HepG2 (cell line): ENCODE measurements at regions of chr10 and their contacts with region 1.

Region 1: GRCh38 chr10:121974535-121975294 is at the start of gene NSMCE4A:
- DNase-seq: peak; percentile 60
- ATAC-seq: peak; percentile 91
- H3K4me3 ChIP-seq: peak within 1 kb of the TSS; percentile 69 to 89 (median 83)
- H3K27ac ChIP-seq: peak within 1 kb of the TSS; percentile 97
- H3K4me1 ChIP-seq: peaks cover 27% of the 10 kb centered on the region
- H3K27me3 ChIP-seq: no peaks in the 10 kb centered on the region
- CTCF ChIP-seq: peak; percentile 78
- EP300 ChIP-seq: no peak; a peak in 1 of 4 replicates
- POLR2A ChIP-seq: peak; percentile 67 to 70; a peak in 3 of 4 replicates
- RAD21 ChIP-seq: peak; percentile 75
- total RNA-seq, gene NSMCE4A: 91.6 and 108 TPM in 2 replicates

Region 2: GRCh38 chr10:121935702-121936101 is 39.0 kb before region 1 on chr10:
- CTCF ChIA-PET with region 1: no interaction called
- POLR2A ChIA-PET with region 1: interaction called, 14 read pairs
- in situ Hi-C with region 1: no loop called
- intact Hi-C with region 1: loop called (anchors 2 kb)
- DNase-seq: peak; percentile 96
- ATAC-seq: peak; percentile 95
- H3K4me3 ChIP-seq: peak overlapping the region in 1 of 3 experiments; percentile 41; a peak in 1 of 6 replicates
- H3K27ac ChIP-seq: peak overlapping the region; percentile 74
- H3K4me1 ChIP-seq: peaks cover 65% of the 10 kb centered on the region
- H3K27me3 ChIP-seq: no peaks in the 10 kb centered on the region
- CTCF ChIP-seq: no peak
- EP300 ChIP-seq: peak in 1 of 2 experiments; percentile 76; a peak in 3 of 4 replicates
- POLR2A ChIP-seq: peak; percentile 59 to 92
- RAD21 ChIP-seq: no peak